Dorsolateral prefrontal cortex (tissue), 120 donors: ENCODE measurements at regions of chr10 and their contacts with region 1.

Region 1: DNA sequence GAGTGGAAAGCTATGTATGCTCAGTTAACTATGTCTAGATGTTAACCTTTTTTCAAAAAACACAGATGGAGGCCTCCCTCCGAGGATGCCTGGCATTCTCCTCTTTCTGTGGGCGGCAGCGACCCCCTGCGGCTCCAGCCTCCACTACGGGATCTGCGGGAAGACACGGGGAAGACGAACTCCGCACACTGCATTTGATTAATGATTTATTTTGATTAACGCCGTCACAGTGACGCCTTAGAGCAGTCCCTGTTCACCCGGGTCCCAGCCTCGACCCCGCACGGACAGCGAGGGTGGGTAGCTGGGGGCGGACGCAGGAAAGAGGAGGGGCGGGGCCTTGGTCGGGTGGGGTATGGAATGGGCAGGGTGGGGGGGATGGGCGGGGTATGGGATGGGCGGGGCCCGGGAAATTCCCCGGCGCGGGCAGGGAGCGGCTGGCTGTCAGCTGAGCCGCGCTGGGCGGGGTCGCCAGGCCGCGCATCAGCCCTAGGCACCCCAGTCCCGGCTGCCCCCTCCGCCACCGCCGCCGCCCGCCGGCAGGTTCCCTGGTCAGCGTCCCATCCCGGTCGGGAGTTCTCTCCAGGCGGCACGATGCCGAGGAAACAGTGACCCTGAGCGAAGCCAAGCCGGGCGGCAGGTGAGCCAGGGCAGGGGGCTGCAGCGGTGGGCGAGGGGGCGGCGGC is at the start of gene OPTN:
- DNase-seq: peak; percentile 62 to 87 (median 74)
- H3K4me3 ChIP-seq: peak within 1 kb of the TSS; percentile 75 to 99 (median 93)
- H3K27ac ChIP-seq: peak within 1 kb of the TSS; percentile 84 to 99 (median 96)
- H3K27me3 ChIP-seq: no peaks in the 10 kb centered on the region
- CTCF ChIP-seq: peak in 55 of 56 donors; percentile 48 to 79 (median 67)
- total RNA-seq, gene OPTN: 84.3 to 188 (median 136) TPM

Region 2: GRCh38 chr10:12195603-12196506 is 904.0 kb before region 1 on chr10 and contains the starts of genes CDC123 and NUDT5:
- intact Hi-C with region 1: loop called in 1 of 2 experiments (anchors 5 kb)
- DNase-seq: peak; percentile 82 to 91 (median 87)
- H3K4me3 ChIP-seq: peak within 1 kb of the TSS; percentile 50 to 100 (median 91)
- H3K27ac ChIP-seq: peak within 1 kb of the TSS; percentile 63 to 100 (median 96)
- H3K27me3 ChIP-seq: no peaks in the 10 kb centered on the region
- CTCF ChIP-seq: peak in 33 of 56 donors; percentile 2 to 55 (median 27)
- total RNA-seq, gene CDC123: 32.1 to 76.3 (median 54.4) TPM
- total RNA-seq, gene NUDT5: 19.1 to 48.8 (median 33.7) TPM

Region 3: DNA sequence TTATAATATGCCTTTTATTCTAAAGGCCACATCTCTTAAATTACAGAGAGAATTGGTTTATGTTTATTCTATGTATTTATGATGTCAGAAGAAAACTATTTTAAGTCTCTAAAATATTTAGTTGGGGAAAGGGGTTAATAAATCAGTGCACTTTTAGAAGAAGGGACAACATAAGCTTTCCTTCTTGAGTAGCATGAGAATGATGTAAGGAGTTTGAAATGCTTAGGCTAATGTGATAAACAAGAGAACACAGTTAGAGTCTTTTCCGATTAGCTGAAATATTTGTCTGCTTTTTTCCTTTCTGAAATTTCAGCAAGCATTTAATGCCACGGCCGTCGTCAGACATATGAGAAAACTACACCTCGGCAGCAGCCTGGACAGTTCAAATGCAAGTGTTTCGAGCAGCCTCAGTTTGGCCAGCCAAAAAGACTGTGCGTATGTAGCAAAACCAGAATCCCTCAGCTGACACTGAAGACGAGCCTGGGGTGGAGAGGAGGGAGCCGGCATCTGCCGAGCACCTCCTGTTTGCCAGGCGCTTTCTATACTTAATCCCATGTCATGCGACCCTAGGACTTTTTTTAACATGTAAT is 274.5 kb before region 1 on chr10:
- intact Hi-C with region 1: no loop called
- DNase-seq: peak in 1 of 10 donors; percentile 0
- H3K4me3 ChIP-seq: no peak overlapping the region
- H3K27ac ChIP-seq: peak overlapping the region in 6 of 59 donors; percentile 6 to 40 (median 20)
- H3K27me3 ChIP-seq: no peaks in the 10 kb centered on the region
- CTCF ChIP-seq: no peak

Region 4: DNA sequence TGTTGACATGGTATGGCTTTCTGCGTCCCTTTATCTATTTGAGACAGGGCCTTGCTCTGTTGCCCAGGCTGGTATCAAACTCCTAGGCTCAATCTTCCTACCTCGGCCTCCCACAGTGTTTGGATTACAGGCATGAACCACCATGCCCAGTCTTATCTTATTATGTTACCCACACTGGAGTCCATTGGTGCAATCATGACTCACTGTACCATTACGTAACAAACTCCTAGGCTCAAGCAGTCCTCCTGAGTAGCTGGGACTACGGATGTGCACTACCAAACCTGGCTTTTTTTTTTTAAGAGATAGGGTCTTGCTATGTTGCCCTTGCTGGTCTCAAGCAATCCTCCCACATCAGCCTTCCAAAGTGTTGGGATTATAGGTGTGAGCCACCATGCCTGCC is 165.0 kb before region 1 on chr10:
- intact Hi-C with region 1: no loop called
- DNase-seq: no peak
- H3K4me3 ChIP-seq: no peak overlapping the region
- H3K27ac ChIP-seq: peak overlapping the region in 1 of 59 donors; percentile 7
- H3K27me3 ChIP-seq: no peaks in the 10 kb centered on the region
- CTCF ChIP-seq: no peak